ENCODE measurements at regions of chr6 and their contacts with region 1.

Region 1: DNA sequence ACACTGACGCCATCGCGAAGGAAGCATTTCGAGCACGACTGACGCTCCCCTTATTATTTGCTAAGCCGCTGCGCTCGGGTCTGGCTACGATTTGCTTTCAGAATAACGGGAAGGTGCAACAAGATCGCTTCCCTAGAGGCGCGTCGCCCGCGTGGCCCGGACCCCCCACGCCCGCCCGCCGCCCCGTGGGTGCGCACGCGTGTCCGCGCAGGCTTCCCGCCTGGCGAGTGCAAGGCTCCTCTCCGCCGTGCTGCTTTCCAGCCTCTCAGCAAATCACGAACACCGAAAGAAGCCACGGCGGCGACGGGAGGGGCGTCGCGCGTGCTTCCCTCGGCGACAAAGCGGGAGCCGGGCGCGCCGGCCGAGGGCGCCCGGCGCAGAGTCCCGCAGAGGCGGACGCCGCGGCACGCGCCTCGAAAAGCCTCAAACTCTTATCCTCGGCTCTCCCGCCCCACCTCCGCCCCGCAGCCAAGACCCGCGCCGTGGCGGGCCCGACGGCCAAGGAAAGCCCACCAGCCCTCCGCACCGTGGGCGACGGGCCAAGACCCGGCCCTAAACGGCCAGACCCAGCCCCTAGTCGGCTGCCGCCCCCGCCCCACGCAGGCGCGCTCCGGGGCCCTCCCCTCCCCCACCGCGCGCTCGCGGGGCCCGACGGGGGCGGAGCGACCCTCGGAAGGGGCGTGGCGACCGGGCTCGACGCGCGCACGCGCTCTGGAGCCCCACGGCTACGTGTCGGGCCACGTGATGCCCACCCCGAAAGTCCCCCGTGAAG is 987 bp upstream of the QKI start:
- DNase-seq: peak; percentile 98
- ATAC-seq: peak; percentile 70
- H3K4me3 Mint-ChIP-seq: peak overlapping the region; percentile 88
- H3K27ac Mint-ChIP-seq: peak overlapping the region; percentile 91
- H3K4me1 Mint-ChIP-seq: peaks cover 37% of the 10 kb centered on the region
- H3K27me3 Mint-ChIP-seq: no peaks in the 10 kb centered on the region
- CTCF ChIP-seq: no peak

Region 2: GRCh38 chr6:162727309-162728182 is 686.0 kb before region 1 on chr6 and contains the starts of genes PACRG and PRKN:
- CTCF ChIA-PET with region 1: no interaction called
- POLR2A ChIA-PET with region 1: no interaction called
- intact Hi-C with region 1: loop called (anchors 1 kb)
- DNase-seq: peak; percentile 98
- ATAC-seq: peak; percentile 93
- H3K4me3 Mint-ChIP-seq: peak within 1 kb of the TSS; percentile 95
- H3K27ac Mint-ChIP-seq: peak within 1 kb of the TSS; percentile 81
- H3K4me1 Mint-ChIP-seq: peaks cover 10% of the 10 kb centered on the region
- H3K27me3 Mint-ChIP-seq: no peaks in the 10 kb centered on the region
- CTCF ChIP-seq: no peak
- total RNA-seq, gene PACRG: not detected in 2 replicates
- total RNA-seq, gene PRKN: 2.3 and 3.5 TPM in 2 replicates

Region 3: DNA sequence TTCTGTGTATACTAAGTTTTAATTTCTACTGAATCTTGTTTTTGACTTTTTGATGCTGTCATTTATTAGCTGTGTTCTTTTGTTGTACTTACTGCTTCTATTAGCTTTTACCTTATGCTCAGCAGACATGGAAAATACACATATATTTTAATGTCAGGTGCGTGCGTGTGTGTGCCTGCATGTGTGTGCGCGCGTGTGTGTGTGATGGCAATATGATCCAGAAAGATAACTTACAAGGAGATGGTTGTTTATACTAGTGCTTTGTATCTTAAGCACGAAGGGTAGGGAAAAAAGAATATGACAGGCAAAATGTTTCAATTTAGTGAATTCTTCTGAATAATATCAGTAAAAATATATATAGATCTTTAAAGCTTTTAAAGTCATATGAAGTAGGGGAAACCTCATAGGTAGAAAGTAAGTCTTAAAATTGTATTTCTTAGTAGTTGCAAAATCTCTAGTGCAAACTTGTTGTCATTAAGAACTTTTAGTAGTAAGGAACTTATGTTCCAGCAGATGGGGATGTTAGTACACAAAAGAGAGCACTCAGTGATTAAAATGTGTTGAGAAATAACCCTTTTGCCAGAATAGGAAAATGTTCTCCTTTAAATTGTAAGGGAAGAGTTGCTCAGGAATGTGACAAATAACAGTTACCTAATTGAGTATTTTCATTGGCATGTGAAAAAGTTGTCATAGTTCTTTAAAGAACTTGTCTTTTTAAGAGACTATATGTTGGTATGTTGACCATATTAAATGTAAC is 14.1 kb after region 1 on chr6:
- CTCF ChIA-PET with region 1: interaction called, 6 read pairs
- POLR2A ChIA-PET with region 1: interaction called, 16 read pairs
- intact Hi-C with region 1: loop called (anchors 1 kb)
- DNase-seq: no peak
- ATAC-seq: no peak
- H3K4me3 Mint-ChIP-seq: no peak overlapping the region
- H3K27ac Mint-ChIP-seq: no peak overlapping the region
- H3K4me1 Mint-ChIP-seq: peaks cover 45% of the 10 kb centered on the region
- H3K27me3 Mint-ChIP-seq: no peaks in the 10 kb centered on the region
- CTCF ChIP-seq: no peak

Region 4: DNA sequence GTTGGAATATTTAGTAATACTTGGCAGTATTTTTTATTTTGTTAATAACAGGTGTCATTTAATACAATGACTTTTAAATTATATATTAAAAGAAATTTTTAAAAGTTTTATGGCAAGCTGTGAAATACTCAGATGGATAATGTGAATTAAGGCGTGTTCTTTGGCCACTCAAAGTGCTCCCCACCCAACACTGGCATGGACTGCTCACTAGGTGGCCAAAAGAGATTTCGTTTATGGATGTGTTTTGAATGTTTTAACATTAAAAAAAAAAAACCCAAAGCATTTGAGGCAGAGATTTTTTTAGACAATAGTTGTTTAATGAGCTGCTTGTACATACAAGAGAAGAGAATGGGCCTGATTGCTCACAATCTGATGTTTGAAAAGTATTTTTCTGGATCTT is 87.5 kb after region 1 on chr6:
- CTCF ChIA-PET with region 1: no interaction called
- POLR2A ChIA-PET with region 1: no interaction called
- intact Hi-C with region 1: no loop called
- DNase-seq: no peak
- ATAC-seq: no peak
- H3K4me3 Mint-ChIP-seq: no peak overlapping the region
- H3K27ac Mint-ChIP-seq: no peak overlapping the region
- H3K4me1 Mint-ChIP-seq: peaks cover 18% of the 10 kb centered on the region
- H3K27me3 Mint-ChIP-seq: no peaks in the 10 kb centered on the region
- CTCF ChIP-seq: no peak

Region 5: GRCh38 chr6:163554663-163555062 is 141.1 kb after region 1 on chr6:
- CTCF ChIA-PET with region 1: no interaction called
- POLR2A ChIA-PET with region 1: no interaction called
- intact Hi-C with region 1: loop called (anchors 5 kb)
- DNase-seq: no peak
- ATAC-seq: no peak
- H3K4me3 Mint-ChIP-seq: no peak overlapping the region
- H3K27ac Mint-ChIP-seq: no peak overlapping the region
- H3K4me1 Mint-ChIP-seq: no peaks in the 10 kb centered on the region
- H3K27me3 Mint-ChIP-seq: no peaks in the 10 kb centered on the region
- CTCF ChIP-seq: peak; percentile 17

Region 6: GRCh38 chr6:163711615-163712565 is 298.4 kb after region 1 on chr6:
- CTCF ChIA-PET with region 1: no interaction called
- POLR2A ChIA-PET with region 1: interaction called, 3 read pairs
- intact Hi-C with region 1: loop called (anchors 2 kb)
- DNase-seq: peak; percentile 48
- ATAC-seq: peak; percentile 72
- H3K4me3 Mint-ChIP-seq: peak overlapping the region; percentile 63
- H3K27ac Mint-ChIP-seq: peak overlapping the region; percentile 74
- H3K4me1 Mint-ChIP-seq: peaks cover 86% of the 10 kb centered on the region
- H3K27me3 Mint-ChIP-seq: no peaks in the 10 kb centered on the region
- CTCF ChIP-seq: no peak

Region 7: GRCh38 chr6:163956571-163957407 is 543.3 kb after region 1 on chr6:
- CTCF ChIA-PET with region 1: interaction called, 22 read pairs
- POLR2A ChIA-PET with region 1: interaction called, 3 read pairs
- intact Hi-C with region 1: loop called (anchors 1 kb)
- DNase-seq: peak; percentile 53
- ATAC-seq: peak; percentile 88
- H3K4me3 Mint-ChIP-seq: no peak overlapping the region
- H3K27ac Mint-ChIP-seq: no peak overlapping the region
- H3K4me1 Mint-ChIP-seq: peaks cover 5% of the 10 kb centered on the region
- H3K27me3 Mint-ChIP-seq: peaks cover 20% of the 10 kb centered on the region
- CTCF ChIP-seq: no peak

Measured in activated B cell treated with CpG ODN at 0.5 μM for 24 hours (primary cell).